ENCODE measurements at regions of chr11 and their contacts with region 1.

Region 1: DNA sequence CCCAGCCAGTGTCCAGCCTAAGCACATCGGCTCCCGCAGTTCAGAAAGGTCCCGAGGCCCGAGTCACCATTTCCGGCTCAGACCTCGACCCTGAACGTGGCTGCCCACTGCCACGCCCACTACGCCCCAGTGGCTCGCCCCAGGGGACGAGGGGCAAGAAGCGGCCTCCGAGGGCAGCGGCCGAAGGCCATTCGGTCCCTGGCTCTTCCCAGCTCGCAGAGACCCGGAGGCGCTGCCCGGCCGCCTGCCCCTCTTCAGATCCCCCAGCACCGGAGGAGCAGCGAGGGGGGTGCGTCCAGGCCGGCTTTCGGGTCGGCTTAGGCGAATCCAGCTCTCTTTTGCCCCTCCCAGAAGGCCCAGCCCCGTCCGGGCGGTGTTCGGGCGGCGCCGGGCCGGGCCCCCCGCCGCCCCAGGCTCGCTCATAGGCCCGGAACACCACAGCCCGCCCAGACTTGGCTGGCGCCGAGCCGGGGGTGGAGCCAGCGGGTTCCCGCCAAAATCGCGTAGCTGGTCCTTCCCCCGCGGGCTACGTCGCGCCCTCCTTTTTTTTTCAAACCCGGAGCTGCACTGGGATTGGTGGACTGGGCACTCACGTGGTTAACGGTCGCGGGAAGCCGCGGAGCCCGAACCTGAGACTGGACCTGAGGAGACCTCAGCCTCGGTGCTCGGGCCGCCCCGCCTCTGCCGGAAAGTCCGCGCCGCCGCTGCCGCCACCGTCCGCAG is at the start of gene WEE1:
- DNase-seq: peak; percentile 94 to 98 (median 96)
- ATAC-seq: peak; percentile 94
- H3K4me3 ChIP-seq: peak within 1 kb of the TSS; percentile 92
- H3K27ac ChIP-seq: peak within 1 kb of the TSS; percentile 98
- H3K4me1 ChIP-seq: peaks cover 33 to 35% of the 10 kb centered on the region in 2 experiments
- H3K27me3 ChIP-seq: no peaks in the 10 kb centered on the region
- CTCF ChIP-seq: no peak
- EP300 ChIP-seq: peak; percentile 43; the same call in 1 of the 2 replicates
- POLR2A ChIP-seq: peak; percentile 92
- RAD21 ChIP-seq: no peak
- polyA plus RNA-seq, gene WEE1: 21.9 to 30.6 TPM

Region 2: GRCh38 chr11:9003573-9004309 is 569.5 kb before region 1 on chr11 and contains the start of gene NRIP3:
- CTCF ChIA-PET with region 1: no interaction called
- POLR2A ChIA-PET with region 1: no interaction called
- in situ Hi-C with region 1: no loop called
- intact Hi-C with region 1: no loop called
- DNase-seq: peak; percentile 83 to 91 (median 90)
- ATAC-seq: peak; percentile 92
- H3K4me3 ChIP-seq: peak within 1 kb of the TSS; percentile 48
- H3K27ac ChIP-seq: peak within 1 kb of the TSS; percentile 63
- H3K4me1 ChIP-seq: peaks cover 15 to 23% of the 10 kb centered on the region in 2 experiments
- H3K27me3 ChIP-seq: no peaks in the 10 kb centered on the region; a peak in 2 of 5 replicates
- CTCF ChIP-seq: 0 out of 6 replicates have a peak, but pooled peaks of 1 of the 3 experiments have one; percentile 9
- EP300 ChIP-seq: no peak
- POLR2A ChIP-seq: peak; percentile 80
- RAD21 ChIP-seq: 0 out of 4 replicates have a peak, but pooled peaks of 1 of the 2 experiments have one; percentile 3
- polyA plus RNA-seq, gene NRIP3: 4.4 to 6.4 TPM

Region 3: DNA sequence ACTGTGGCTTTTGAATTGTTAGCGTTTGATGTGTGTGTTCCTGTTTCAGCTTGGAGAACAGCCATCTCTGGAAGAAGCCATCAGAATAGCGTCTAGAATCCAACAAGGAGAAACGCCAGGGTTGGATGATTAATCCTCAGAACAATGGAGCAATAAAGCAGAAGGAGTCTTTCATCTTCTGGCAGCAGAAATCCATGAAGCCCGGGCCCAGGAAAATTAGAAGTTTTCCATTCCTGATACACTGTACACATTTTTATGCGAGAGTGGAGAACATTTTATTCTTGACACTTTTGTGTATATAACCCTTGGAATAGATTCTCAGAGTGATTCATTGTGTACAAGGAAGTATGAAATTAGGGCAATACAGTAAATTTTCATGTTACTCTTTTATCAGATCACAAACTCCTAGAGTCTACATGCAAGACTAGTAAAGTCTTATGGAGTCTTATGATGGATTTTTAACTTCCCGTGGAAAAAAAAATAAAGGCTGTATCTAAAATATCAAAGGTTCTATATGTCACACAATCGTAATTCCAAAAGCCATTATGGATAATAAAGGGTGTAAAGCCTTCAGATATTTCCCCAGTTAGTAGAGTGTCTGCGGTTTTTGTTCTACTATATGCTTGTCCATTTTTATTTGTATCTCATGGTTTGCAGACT is 45.6 kb before region 1 on chr11:
- CTCF ChIA-PET with region 1: no interaction called
- POLR2A ChIA-PET with region 1: interaction called, 16 read pairs
- in situ Hi-C with region 1: no loop called
- intact Hi-C with region 1: no loop called
- DNase-seq: no peak
- ATAC-seq: no peak
- H3K4me3 ChIP-seq: no peak overlapping the region
- H3K27ac ChIP-seq: no peak overlapping the region; the same call in 2 of the 3 replicates
- H3K4me1 ChIP-seq: peaks cover 21 to 23% of the 10 kb centered on the region in 2 experiments; a peak in 4 of 5 replicates
- H3K27me3 ChIP-seq: no peaks in the 10 kb centered on the region
- CTCF ChIP-seq: no peak
- EP300 ChIP-seq: no peak
- POLR2A ChIP-seq: no peak
- RAD21 ChIP-seq: no peak

Region 4: GRCh38 chr11:9534791-9535781 is 38.1 kb before region 1 on chr11:
- CTCF ChIA-PET with region 1: no interaction called
- POLR2A ChIA-PET with region 1: interaction called, 16 read pairs
- in situ Hi-C with region 1: loop called (anchors 5 kb)
- intact Hi-C with region 1: loop called (anchors 2 kb)
- DNase-seq: peak; percentile 75 to 88 (median 78)
- ATAC-seq: peak; percentile 86
- H3K4me3 ChIP-seq: no peak overlapping the region
- H3K27ac ChIP-seq: no peak overlapping the region
- H3K4me1 ChIP-seq: peaks cover 11 to 15% of the 10 kb centered on the region in 2 experiments; a peak in 4 of 5 replicates
- H3K27me3 ChIP-seq: no peaks in the 10 kb centered on the region
- CTCF ChIP-seq: peak; percentile 88 to 96 (median 94)
- EP300 ChIP-seq: peak; percentile 32; the same call in 1 of the 2 replicates
- POLR2A ChIP-seq: no peak
- RAD21 ChIP-seq: peak; percentile 82 to 92

Region 5: GRCh38 chr11:9550191-9550628 is 23.0 kb before region 1 on chr11:
- CTCF ChIA-PET with region 1: no interaction called
- POLR2A ChIA-PET with region 1: interaction called, 14 read pairs
- in situ Hi-C with region 1: no loop called
- intact Hi-C with region 1: loop called (anchors 1 kb)
- DNase-seq: peak in 1 of 4 experiments; percentile 71
- ATAC-seq: peak; percentile 9; the same call in 2 of the 3 replicates
- H3K4me3 ChIP-seq: no peak overlapping the region
- H3K27ac ChIP-seq: peak overlapping the region; percentile 85
- H3K4me1 ChIP-seq: peaks cover 26 to 30% of the 10 kb centered on the region in 2 experiments; a peak in 4 of 5 replicates
- H3K27me3 ChIP-seq: no peaks in the 10 kb centered on the region; a peak in 1 of 5 replicates
- CTCF ChIP-seq: no peak
- EP300 ChIP-seq: peak; percentile 70; the same call in 1 of the 2 replicates
- POLR2A ChIP-seq: no peak
- RAD21 ChIP-seq: no peak

Region 6: DNA sequence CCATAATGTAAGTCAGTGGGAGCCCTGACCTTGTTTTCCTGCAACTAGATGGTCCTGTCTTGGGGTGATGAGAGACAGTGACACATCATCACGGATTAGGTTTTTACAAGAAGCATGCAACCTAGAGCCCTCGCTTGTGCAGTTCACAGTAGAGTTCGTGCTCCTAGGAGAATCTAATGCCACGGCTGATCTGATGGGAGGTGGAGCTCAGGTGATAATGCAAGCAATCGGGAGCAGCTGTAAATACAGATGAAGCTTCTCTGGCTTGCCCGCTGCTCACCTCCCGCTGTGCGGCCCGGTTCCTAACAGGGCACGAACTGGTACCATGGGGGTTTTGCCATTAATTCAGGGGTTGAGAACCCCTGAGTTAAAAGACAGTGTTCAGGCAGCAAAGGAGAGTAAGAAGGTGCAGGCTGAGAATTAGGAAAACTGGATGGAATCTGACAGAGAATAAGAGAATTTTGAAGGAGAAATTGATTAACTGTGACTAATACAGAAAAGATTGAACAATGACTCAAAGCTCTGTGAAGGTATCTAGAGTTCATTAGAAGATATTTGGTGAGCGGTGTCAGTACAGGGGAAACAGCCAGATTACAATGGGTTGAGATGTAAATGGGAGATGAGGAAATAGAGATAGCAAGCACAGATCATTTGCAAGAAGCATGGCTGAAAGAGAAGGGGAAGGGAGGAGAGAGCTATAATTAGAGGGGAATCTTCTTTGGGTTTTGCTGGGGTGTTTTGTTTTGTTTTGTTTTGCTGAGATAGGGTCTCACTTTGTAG is 21.2 kb after region 1 on chr11:
- CTCF ChIA-PET with region 1: no interaction called
- POLR2A ChIA-PET with region 1: interaction called, 21 read pairs
- in situ Hi-C with region 1: no loop called
- intact Hi-C with region 1: no loop called
- DNase-seq: no peak
- ATAC-seq: no peak
- H3K4me3 ChIP-seq: no peak overlapping the region
- H3K27ac ChIP-seq: no peak overlapping the region
- H3K4me1 ChIP-seq: peaks cover 4% of the 10 kb centered on the region in 2 experiments; a peak in 1 of 5 replicates
- H3K27me3 ChIP-seq: no peaks in the 10 kb centered on the region
- CTCF ChIP-seq: no peak
- EP300 ChIP-seq: no peak
- POLR2A ChIP-seq: no peak
- RAD21 ChIP-seq: no peak

Region 7: DNA sequence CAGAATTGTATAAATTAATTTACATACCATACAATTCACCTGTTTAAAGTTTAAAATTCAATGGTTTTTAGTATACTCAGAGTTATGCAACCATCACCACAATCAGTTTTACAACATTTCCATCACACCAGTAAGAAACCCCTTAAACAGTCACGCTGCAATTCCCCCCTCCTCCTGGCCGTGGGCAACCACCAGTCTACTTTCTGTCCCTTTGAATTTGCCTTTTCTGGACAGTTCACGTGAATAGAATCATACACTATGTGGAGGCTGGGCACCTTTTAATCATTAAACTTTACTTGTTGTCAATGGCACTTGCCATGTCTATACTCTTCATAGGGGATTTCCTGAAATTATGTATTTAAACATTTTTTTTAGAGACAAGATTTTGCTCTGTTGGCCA is 70.5 kb after region 1 on chr11:
- CTCF ChIA-PET with region 1: no interaction called
- POLR2A ChIA-PET with region 1: no interaction called
- in situ Hi-C with region 1: no loop called
- intact Hi-C with region 1: no loop called
- DNase-seq: no peak
- ATAC-seq: no peak; the same call in 2 of the 3 replicates
- H3K4me3 ChIP-seq: no peak overlapping the region
- H3K27ac ChIP-seq: no peak overlapping the region
- H3K4me1 ChIP-seq: peaks cover 0 to 5% of the 10 kb centered on the region in 2 experiments; a peak in 1 of 5 replicates
- H3K27me3 ChIP-seq: no peaks in the 10 kb centered on the region
- CTCF ChIP-seq: no peak
- EP300 ChIP-seq: no peak
- POLR2A ChIP-seq: no peak
- RAD21 ChIP-seq: no peak

Region 8: GRCh38 chr11:9664276-9665171 is 91.3 kb after region 1 on chr11:
- CTCF ChIA-PET with region 1: no interaction called
- POLR2A ChIA-PET with region 1: no interaction called
- in situ Hi-C with region 1: no loop called
- intact Hi-C with region 1: no loop called
- DNase-seq: peak in 2 of 4 experiments; percentile 12 to 25
- ATAC-seq: peak; percentile 76
- H3K4me3 ChIP-seq: peak overlapping the region; percentile 47
- H3K27ac ChIP-seq: peak overlapping the region; percentile 37; the same call in 1 of the 3 replicates
- H3K4me1 ChIP-seq: peaks cover 0 to 10% of the 10 kb centered on the region in 2 experiments; a peak in 3 of 5 replicates
- H3K27me3 ChIP-seq: no peaks in the 10 kb centered on the region
- CTCF ChIP-seq: no peak
- EP300 ChIP-seq: no peak
- POLR2A ChIP-seq: no peak
- RAD21 ChIP-seq: no peak